GM12878 (cell line): ENCODE measurements at regions of chr1 and their contacts with region 1.

Region 1: GRCh38 chr1:23403735-23404486 is 20.6 kb downstream of the TCEA3 start:
- DNase-seq: peak; percentile 16
- ATAC-seq: peak; percentile 98
- H3K4me3 ChIP-seq: no peak overlapping the region
- H3K27ac ChIP-seq: no peak overlapping the region
- H3K4me1 ChIP-seq: 0 out of 2 replicates have a peak, but pooled peaks cover 5% of the 10 kb centered on the region
- H3K27me3 ChIP-seq: peaks cover 1 to 3% of the 10 kb centered on the region in 2 experiments; a peak in 2 of 4 replicates
- CTCF ChIP-seq: peak; percentile 94 to 99 (median 95); a peak in 5 of 6 replicates
- EP300 ChIP-seq: no peak
- POLR2A ChIP-seq: no peak
- RAD21 ChIP-seq: peak; percentile 89

Region 2: DNA sequence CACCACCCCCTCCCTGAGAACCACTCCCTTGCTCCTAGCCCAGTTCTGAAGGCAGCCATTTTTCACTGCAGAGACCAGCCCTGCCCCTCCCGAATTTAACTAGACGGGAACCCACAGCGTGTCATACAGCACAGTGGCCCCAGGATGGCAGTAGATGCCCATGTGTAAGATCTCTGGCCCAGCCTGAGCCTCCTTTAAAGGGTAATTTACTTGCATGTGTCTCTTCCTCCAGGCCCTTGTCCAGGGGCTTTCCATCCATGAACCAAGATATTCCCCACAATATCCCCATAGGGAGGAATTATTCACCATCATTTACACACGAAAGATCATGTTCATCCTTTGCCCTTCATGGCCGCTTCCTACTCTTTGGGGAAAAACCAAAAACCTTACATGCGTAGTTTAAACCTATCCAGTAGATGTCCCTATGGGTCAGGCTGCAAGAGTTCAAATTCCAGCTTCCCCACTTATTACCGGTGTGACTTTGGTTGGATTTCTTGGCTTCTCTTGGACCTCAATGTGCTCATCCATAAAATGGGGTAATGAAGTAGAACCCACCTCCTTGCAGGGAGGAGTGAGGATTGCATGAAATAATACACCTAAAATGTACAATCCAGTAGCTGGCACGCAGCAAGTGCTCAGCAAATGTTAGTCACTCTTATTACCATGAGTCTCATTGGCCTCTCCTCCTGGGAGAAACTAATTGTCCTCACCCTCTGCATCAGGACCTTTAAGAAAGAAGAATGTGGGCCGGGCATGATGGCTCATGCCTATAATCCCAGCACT is 427.3 kb before region 1 on chr1:
- CTCF ChIA-PET with region 1: no interaction called
- POLR2A ChIA-PET with region 1: no interaction called
- RAD21 ChIA-PET with region 1: no interaction called
- SMC1A ChIA-PET with region 1: no interaction called
- in situ Hi-C with region 1: no loop called
- intact Hi-C with region 1: loop called (anchors 5 kb)
- DNase-seq: peak; percentile 40
- ATAC-seq: peak; percentile 99
- H3K4me3 ChIP-seq: no peak overlapping the region
- H3K27ac ChIP-seq: no peak overlapping the region
- H3K4me1 ChIP-seq: no peaks in the 10 kb centered on the region
- H3K27me3 ChIP-seq: peaks cover 0 to under 1% of the 10 kb centered on the region in 2 experiments; a peak in 2 of 4 replicates
- CTCF ChIP-seq: peak; percentile 88 to 95 (median 90)
- EP300 ChIP-seq: no peak
- POLR2A ChIP-seq: no peak
- RAD21 ChIP-seq: peak; percentile 95

Region 3: GRCh38 chr1:23216771-23217420 is 187.0 kb before region 1 on chr1:
- CTCF ChIA-PET with region 1: interaction called, 3 read pairs
- POLR2A ChIA-PET with region 1: no interaction called
- RAD21 ChIA-PET with region 1: no interaction called
- SMC1A ChIA-PET with region 1: interaction called, 3 read pairs
- in situ Hi-C with region 1: no loop called
- intact Hi-C with region 1: loop called (anchors 5 kb)
- DNase-seq: no peak
- ATAC-seq: peak; percentile 81
- H3K4me3 ChIP-seq: no peak overlapping the region
- H3K27ac ChIP-seq: no peak overlapping the region
- H3K4me1 ChIP-seq: no peaks in the 10 kb centered on the region
- H3K27me3 ChIP-seq: peaks cover 0 to 5% of the 10 kb centered on the region in 2 experiments; a peak in 3 of 4 replicates
- CTCF ChIP-seq: peak; percentile 46 to 60 (median 51); a peak in 5 of 6 replicates
- EP300 ChIP-seq: no peak
- POLR2A ChIP-seq: no peak
- RAD21 ChIP-seq: peak; percentile 32

Region 4: GRCh38 chr1:23322770-23323169 is 81.1 kb before region 1 on chr1:
- CTCF ChIA-PET with region 1: interaction called, 7 read pairs
- POLR2A ChIA-PET with region 1: no interaction called
- RAD21 ChIA-PET with region 1: no interaction called
- SMC1A ChIA-PET with region 1: no interaction called
- in situ Hi-C with region 1: no loop called
- intact Hi-C with region 1: loop called (anchors 5 kb)
- DNase-seq: no peak
- ATAC-seq: no peak
- H3K4me3 ChIP-seq: no peak overlapping the region
- H3K27ac ChIP-seq: no peak overlapping the region
- H3K4me1 ChIP-seq: no peaks in the 10 kb centered on the region
- H3K27me3 ChIP-seq: no peaks in the 10 kb centered on the region
- CTCF ChIP-seq: no peak
- EP300 ChIP-seq: no peak
- POLR2A ChIP-seq: no peak
- RAD21 ChIP-seq: no peak

Region 5: DNA sequence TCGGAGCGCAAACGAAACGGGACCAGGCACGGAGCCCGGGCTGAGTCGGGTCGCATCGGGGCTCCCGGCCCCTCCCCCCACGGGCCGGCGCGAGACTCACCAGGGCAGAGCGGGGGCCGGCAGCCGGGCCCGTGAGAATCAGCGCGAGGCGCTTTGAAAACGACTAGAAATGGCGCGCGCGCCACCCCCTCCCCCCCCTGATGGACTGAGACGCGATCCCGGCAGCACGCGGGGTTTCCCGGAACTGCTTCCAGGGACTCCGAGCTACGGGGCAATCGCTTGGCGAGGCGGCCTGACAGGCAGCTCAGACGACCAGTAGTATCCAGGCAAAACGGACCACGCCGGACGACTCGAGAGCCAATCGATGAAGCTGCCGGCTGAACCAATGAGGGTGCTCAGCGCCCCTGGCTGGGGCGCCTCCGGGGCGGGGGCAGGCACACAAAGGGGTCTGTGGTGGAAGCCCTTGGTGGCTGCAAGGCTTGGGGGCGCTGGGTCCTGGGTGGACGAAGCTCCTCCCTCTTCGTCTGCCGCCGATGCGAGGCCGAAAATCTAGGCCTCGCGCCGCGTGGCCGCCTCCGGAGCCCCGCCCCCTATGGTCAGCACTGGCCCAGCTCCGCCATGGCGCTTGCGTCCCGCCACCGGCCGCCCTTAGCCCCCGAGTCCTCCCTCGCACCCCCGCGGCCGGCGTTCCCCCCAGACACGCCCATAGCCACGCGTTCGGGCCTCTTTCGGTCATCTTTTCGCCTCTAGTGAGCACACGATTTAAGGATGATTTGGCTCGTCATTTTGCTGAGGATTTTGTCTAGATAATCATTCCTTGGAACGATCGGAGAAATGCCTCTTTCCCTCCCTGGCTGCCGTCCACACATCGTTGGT is 59.6 kb before region 1 on chr1 and contains the start of gene HNRNPR:
- CTCF ChIA-PET with region 1: interaction called, 4 read pairs
- POLR2A ChIA-PET with region 1: no interaction called
- RAD21 ChIA-PET with region 1: interaction called, 4 read pairs
- SMC1A ChIA-PET with region 1: interaction called, 11 read pairs
- in situ Hi-C with region 1: no loop called
- intact Hi-C with region 1: loop called (anchors 5 kb)
- DNase-seq: peak; percentile 98
- ATAC-seq: peak; percentile 96
- H3K4me3 ChIP-seq: peak within 1 kb of the TSS; percentile 84
- H3K27ac ChIP-seq: peak within 1 kb of the TSS; percentile 92
- H3K4me1 ChIP-seq: peaks cover 3% of the 10 kb centered on the region; the same call in 1 of the 2 replicates
- H3K27me3 ChIP-seq: no peaks in the 10 kb centered on the region
- CTCF ChIP-seq: 0 out of 6 replicates have a peak, but pooled peaks of 1 of the 3 experiments have one; percentile 5
- EP300 ChIP-seq: no peak
- POLR2A ChIP-seq: peak; percentile 91
- RAD21 ChIP-seq: no peak
- polyA plus RNA-seq, gene HNRNPR: 80.5 to 138 TPM

Region 6: GRCh38 chr1:23367791-23368561 is 35.9 kb before region 1 on chr1:
- CTCF ChIA-PET with region 1: interaction called, 13 read pairs
- POLR2A ChIA-PET with region 1: no interaction called
- RAD21 ChIA-PET with region 1: interaction called, 3 read pairs
- SMC1A ChIA-PET with region 1: interaction called, 3 read pairs
- in situ Hi-C with region 1: no loop called
- intact Hi-C with region 1: no loop called
- DNase-seq: peak; percentile 97
- ATAC-seq: peak; percentile 97
- H3K4me3 ChIP-seq: peak overlapping the region; percentile 89
- H3K27ac ChIP-seq: peak overlapping the region; percentile 74
- H3K4me1 ChIP-seq: no peaks in the 10 kb centered on the region
- H3K27me3 ChIP-seq: no peaks in the 10 kb centered on the region
- CTCF ChIP-seq: no peak
- EP300 ChIP-seq: no peak
- POLR2A ChIP-seq: peak; percentile 90
- RAD21 ChIP-seq: no peak